Activated CD4-positive, alpha-beta T cell treated with anti-CD3 and anti-CD28 coated beads, Interleukin-2, amount 10 ng/mL, durations not matched to agents 24 days and 14 days (primary cell): ENCODE measurements at regions of chr4 and their contacts with region 1.

Region 1: GRCh38 chr4:17468371-17469221 is 43.3 kb downstream of the QDPR start:
- DNase-seq: no peak
- H3K4me3 Mint-ChIP-seq: no peak overlapping the region
- H3K27ac Mint-ChIP-seq: no peak overlapping the region
- H3K4me1 Mint-ChIP-seq: no peaks in the 10 kb centered on the region
- H3K27me3 Mint-ChIP-seq: no peaks in the 10 kb centered on the region

Region 2: GRCh38 chr4:16289897-16290554 is 1178.6 kb before region 1 on chr4:
- intact Hi-C with region 1: loop called (anchors 5 kb)
- DNase-seq: peak; percentile 69
- H3K4me3 Mint-ChIP-seq: no peak overlapping the region
- H3K27ac Mint-ChIP-seq: no peak overlapping the region
- H3K4me1 Mint-ChIP-seq: peaks cover 3% of the 10 kb centered on the region
- H3K27me3 Mint-ChIP-seq: peaks cover 7% of the 10 kb centered on the region

Region 3: DNA sequence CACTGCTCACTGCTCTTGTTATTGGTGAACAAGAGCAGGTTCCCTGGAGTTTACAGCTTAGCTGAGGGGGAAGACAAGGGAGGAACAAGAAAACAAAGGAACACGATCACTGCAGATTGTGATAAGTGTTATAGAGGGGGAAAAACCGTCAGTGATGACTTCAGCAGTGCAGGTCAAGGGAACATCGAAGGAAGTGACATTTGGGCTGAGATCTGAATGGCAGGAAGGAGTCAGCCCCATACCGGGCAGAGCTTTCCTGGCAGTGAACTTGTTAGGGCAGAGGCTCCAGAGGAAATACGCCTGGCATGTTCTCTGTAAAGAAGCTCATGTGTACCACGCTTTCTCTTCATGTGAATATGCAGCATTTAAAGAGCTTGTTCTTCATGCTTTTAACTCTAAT is 648.3 kb before region 1 on chr4:
- intact Hi-C with region 1: no loop called
- DNase-seq: no peak
- H3K4me3 Mint-ChIP-seq: no peak overlapping the region
- H3K27ac Mint-ChIP-seq: no peak overlapping the region
- H3K4me1 Mint-ChIP-seq: no peaks in the 10 kb centered on the region
- H3K27me3 Mint-ChIP-seq: no peaks in the 10 kb centered on the region

Region 4: DNA sequence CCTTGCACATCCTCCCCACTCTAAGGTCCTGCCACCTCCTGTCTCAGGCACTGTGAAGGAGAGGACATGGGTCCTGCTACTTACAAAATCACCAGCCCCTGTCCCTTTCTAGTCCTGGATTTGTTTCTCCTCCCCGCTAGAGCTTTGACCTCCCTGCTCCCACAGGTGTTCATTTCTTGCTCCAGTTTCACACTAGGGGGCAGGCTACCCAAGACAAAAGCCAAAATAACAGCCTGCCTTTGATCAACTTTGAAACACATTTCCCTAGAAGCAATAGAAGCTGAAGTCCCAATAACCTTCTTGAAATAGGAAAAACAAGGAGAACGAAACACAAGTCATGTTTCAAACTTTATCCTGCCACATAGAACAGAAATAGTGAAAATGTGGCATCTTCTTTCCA is 121.2 kb before region 1 on chr4:
- intact Hi-C with region 1: loop called (anchors 5 kb)
- DNase-seq: peak; percentile 83
- H3K4me3 Mint-ChIP-seq: no peak overlapping the region
- H3K27ac Mint-ChIP-seq: no peak overlapping the region
- H3K4me1 Mint-ChIP-seq: no peaks in the 10 kb centered on the region
- H3K27me3 Mint-ChIP-seq: peaks cover 6% of the 10 kb centered on the region

Region 5: DNA sequence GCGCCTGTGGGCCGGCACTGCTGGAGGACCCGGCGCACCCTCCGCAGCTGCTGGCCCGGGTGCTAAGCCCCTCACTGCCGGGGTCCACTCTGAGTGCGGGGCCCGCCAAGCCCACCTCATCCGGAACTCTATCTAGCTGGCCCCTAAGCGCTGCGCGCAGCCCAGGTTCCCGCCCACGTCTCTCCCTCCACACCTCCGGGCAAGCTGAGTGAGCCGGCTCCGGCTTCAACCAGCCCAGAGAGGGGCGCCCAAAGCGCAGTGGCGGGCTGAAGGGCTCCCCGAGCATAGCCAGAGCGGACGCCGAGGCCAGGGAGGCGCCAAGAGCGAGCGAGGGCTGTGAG is 31.9 kb before region 1 on chr4:
- intact Hi-C with region 1: no loop called
- DNase-seq: peak; percentile 52
- H3K4me3 Mint-ChIP-seq: no peak overlapping the region
- H3K27ac Mint-ChIP-seq: no peak overlapping the region
- H3K4me1 Mint-ChIP-seq: no peaks in the 10 kb centered on the region
- H3K27me3 Mint-ChIP-seq: peaks cover 2% of the 10 kb centered on the region

Region 6: GRCh38 chr4:17447675-17448298 is 20.8 kb before region 1 on chr4:
- intact Hi-C with region 1: no loop called
- DNase-seq: peak; percentile 90
- H3K4me3 Mint-ChIP-seq: no peak overlapping the region
- H3K27ac Mint-ChIP-seq: no peak overlapping the region
- H3K4me1 Mint-ChIP-seq: peaks cover 4% of the 10 kb centered on the region
- H3K27me3 Mint-ChIP-seq: peaks cover 2% of the 10 kb centered on the region

Region 7: DNA sequence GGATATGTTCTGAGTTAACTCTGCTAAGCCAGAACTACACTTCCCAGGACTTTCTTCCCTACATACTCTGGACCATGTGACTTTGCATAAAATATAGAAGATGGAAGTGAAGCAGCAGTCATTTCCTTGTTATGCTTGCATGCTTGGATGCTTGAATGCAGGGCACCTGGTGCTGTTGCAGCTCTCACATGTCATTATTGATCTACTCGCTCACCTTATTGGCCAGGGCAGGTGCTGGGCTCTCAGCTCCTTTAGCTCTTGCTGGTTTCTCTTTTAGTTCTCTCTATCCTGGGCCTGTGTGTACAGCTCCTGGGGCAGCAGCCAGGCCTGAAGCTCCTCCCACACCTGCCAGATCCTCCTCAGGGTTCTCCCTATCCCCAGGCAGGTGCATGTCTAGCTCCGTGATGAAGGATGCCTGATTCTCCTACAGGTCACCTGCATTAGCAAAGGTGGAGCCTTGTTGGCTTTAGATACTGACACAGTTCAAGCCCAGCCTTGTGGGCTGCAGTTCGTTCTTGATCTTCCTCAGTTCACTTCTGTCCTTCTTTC is 199.1 kb after region 1 on chr4:
- intact Hi-C with region 1: no loop called
- DNase-seq: no peak
- H3K4me3 Mint-ChIP-seq: no peak overlapping the region
- H3K27ac Mint-ChIP-seq: no peak overlapping the region
- H3K4me1 Mint-ChIP-seq: no peaks in the 10 kb centered on the region
- H3K27me3 Mint-ChIP-seq: peaks cover 15% of the 10 kb centered on the region